Activated naive CD4-positive, alpha-beta T cell treated with anti-CD3 and anti-CD28 coated beads for 36 hours (primary cell): ENCODE measurements at regions of chr3 and their contacts with region 1.

Region 1: GRCh38 chr3:133608388-133608787 is 34.9 kb downstream of the CDV3 start:
- DNase-seq: no peak
- H3K4me3 Mint-ChIP-seq: no peak overlapping the region
- H3K27ac Mint-ChIP-seq: no peak overlapping the region
- H3K4me1 Mint-ChIP-seq: no peaks in the 10 kb centered on the region
- H3K27me3 Mint-ChIP-seq: no peaks in the 10 kb centered on the region

Region 2: DNA sequence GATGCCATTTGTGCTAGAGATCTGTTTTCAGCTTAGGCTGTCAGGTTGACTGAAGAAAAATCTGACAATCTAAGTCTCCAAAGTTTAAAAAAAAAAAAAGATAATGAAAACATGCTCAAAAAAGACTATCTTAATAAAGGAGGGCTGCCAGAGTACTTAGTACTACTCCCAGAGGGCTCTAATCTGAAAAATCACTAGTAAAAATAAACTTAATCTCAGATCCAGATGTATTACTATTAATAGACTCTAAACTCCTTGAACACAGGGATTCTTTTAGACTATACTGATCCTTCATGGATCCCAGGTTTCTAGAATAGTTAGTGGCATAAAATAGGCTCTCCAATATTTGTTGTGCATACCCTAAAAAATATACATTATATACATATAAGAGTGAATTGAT is 19.4 kb after region 1 on chr3:
- CTCF ChIA-PET with region 1: no interaction called
- intact Hi-C with region 1: loop called (anchors 2 kb)
- DNase-seq: no peak
- H3K4me3 Mint-ChIP-seq: no peak overlapping the region
- H3K27ac Mint-ChIP-seq: no peak overlapping the region
- H3K4me1 Mint-ChIP-seq: peaks cover 3% of the 10 kb centered on the region
- H3K27me3 Mint-ChIP-seq: no peaks in the 10 kb centered on the region

Region 3: DNA sequence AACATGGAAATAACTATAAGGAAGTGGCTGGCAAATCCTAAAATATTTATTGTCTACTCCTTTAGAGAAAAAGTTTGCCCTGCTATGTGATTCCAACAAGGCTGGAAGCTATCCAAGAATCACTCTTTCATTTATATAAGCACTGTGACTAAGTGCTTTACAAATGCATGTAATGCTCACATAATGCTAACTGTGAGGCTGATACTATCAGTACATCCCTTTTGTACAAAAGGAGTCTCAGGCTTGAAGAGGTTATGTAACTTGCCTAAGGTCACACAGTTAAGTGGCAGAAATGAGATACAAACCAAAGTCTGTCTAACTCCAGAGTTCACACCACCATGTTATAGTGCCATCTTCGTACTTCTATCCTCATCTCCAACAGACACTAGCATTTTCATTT is 36.4 kb after region 1 on chr3:
- CTCF ChIA-PET with region 1: no interaction called
- intact Hi-C with region 1: loop called (anchors 5 kb)
- DNase-seq: no peak
- H3K4me3 Mint-ChIP-seq: no peak overlapping the region
- H3K27ac Mint-ChIP-seq: no peak overlapping the region
- H3K4me1 Mint-ChIP-seq: peaks cover 1% of the 10 kb centered on the region
- H3K27me3 Mint-ChIP-seq: no peaks in the 10 kb centered on the region

Region 4: DNA sequence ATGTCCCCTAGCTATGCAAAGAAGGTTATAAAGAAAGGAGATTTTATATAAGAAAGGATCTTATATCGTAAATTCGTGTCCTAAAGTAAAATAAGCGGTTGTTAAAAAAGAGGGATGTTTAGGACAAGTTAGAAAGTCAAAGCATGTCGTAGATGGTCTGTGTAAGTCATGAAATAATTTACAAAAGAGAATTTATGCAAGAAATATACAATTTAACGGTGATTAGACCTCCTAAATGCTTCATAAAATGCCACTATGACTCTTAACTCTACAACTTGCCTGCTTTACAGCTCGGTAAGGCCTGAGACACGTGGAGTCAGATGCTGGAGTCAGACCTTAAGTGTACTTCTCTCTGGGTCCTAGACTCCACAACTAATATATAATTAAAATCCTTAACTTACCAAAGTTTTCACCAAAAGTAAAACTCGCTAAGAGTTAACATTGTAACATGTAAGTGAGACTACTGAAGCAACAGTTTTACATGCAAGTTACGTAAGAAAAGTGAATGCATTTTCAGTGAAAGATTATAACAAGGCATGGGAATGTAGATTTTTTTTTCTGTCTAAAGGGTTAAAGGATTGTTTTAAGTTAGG is 183.9 kb after region 1 on chr3:
- CTCF ChIA-PET with region 1: no interaction called
- intact Hi-C with region 1: no loop called
- DNase-seq: no peak
- H3K4me3 Mint-ChIP-seq: no peak overlapping the region
- H3K27ac Mint-ChIP-seq: no peak overlapping the region
- H3K4me1 Mint-ChIP-seq: no peaks in the 10 kb centered on the region
- H3K27me3 Mint-ChIP-seq: peaks cover 10% of the 10 kb centered on the region

Region 5: DNA sequence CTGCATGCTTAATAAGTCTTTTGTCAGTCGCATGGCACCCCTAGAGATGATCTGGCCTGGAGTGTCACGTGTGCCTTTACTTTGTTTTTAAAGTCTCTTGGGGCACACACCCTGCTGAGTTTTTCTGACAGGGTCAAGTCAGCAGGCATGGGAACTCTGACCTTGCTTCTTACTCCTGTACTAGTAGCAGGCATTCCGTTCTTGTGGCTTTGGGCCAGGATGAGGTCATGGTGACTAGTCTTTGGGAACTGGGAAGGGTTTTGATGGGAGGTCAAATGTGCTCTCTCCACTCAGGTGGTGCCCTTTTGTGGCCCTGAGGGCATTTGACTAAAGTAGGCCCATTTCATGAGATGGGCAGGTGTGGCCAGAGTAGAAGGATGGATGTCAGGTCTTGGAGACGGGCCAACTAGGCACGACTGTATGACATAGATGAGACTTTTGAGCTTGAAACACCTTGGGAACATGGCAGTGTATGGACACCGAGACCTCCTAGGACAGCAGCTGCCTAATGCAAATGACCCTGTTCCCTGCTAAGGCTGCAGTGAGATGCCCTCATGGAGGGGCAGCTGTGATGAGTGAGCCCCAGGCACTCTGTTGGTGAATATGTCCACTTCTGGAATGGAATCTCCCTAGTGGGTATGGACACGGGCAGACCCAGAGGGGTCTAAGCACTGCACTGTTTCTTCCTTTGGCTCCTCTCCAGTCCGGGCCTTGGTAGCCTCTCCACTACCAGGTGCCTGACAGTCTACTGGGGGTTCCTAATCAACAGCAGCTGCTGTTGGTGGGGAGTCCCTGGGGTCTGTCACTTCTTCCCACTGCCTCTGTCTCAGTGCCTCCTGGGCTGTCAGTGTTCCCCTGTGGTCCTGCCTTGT is 213.6 kb after region 1 on chr3:
- CTCF ChIA-PET with region 1: no interaction called
- intact Hi-C with region 1: no loop called
- DNase-seq: no peak
- H3K4me3 Mint-ChIP-seq: no peak overlapping the region
- H3K27ac Mint-ChIP-seq: no peak overlapping the region
- H3K4me1 Mint-ChIP-seq: peaks cover 2% of the 10 kb centered on the region
- H3K27me3 Mint-ChIP-seq: no peaks in the 10 kb centered on the region